ENCODE measurements at regions of chr6 and their contacts with region 1.

Region 1: DNA sequence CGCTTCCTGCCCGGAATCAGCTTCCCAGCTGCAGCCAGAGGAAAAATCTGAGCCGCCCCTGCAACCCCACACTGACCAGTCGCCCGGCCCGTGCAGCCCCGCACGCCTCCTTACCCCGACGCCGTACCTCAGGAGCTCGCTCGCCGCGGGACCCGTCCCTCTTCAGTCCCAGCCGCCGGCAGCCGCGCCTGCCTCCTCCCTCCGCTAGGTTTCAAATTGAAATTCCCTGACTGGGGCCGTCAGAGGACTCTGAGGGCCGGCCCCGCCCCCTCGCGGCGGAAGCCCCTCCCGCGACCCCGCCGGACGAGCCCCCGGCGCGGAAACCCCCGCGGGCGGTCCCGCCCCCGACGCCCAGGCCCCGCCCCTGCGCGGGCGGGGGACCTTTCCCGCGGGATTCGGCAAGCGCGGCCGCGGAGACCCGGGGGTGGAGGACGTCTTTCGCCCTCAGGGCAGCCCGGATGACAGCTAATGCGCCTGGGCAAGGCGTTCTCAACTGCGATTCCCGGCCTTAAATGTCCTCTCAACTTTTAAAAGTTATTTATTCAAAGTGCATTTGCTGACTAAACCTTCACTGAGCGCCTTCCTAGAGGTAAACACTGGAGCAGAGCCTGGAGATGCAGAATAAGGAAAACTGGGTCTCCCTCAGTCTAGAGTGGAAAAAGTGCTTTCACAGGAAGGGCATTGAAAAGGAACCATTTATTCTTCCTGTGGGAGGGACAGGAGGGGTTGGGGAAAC is at the start of gene EPB41L2:
- DNase-seq: peak; percentile 90 to 96 (median 93)
- H3K4me3 ChIP-seq: peak within 1 kb of the TSS; percentile 98
- H3K27ac ChIP-seq: peak within 1 kb of the TSS; percentile 65 to 81
- H3K4me1 ChIP-seq: peaks cover 3% of the 10 kb centered on the region
- H3K27me3 ChIP-seq: no peaks in the 10 kb centered on the region
- CTCF ChIP-seq: peak; percentile 29 to 51 (median 50)
- EP300 ChIP-seq: no peak
- POLR2A ChIP-seq: peak; percentile 84
- total RNA-seq, gene EPB41L2: 113 to 256 (median 204) TPM

Region 2: GRCh38 chr6:131015630-131016263 is 47.4 kb before region 1 on chr6:
- intact Hi-C with region 1: loop called in 1 of 4 experiments (anchors 5 kb)
- DNase-seq: peak in 2 of 5 donors; percentile 40 to 41
- H3K4me3 ChIP-seq: no peak overlapping the region
- H3K27ac ChIP-seq: peak overlapping the region in 1 of 2 donors; percentile 65
- H3K4me1 ChIP-seq: peaks cover 7% of the 10 kb centered on the region
- H3K27me3 ChIP-seq: no peaks in the 10 kb centered on the region
- CTCF ChIP-seq: no peak
- EP300 ChIP-seq: no peak
- POLR2A ChIP-seq: no peak

Region 3: GRCh38 chr6:131488780-131489179 is 425.6 kb after region 1 on chr6:
- intact Hi-C with region 1: no loop called
- DNase-seq: no peak
- H3K4me3 ChIP-seq: no peak overlapping the region
- H3K27ac ChIP-seq: no peak overlapping the region
- H3K4me1 ChIP-seq: no peaks in the 10 kb centered on the region
- H3K27me3 ChIP-seq: no peaks in the 10 kb centered on the region
- CTCF ChIP-seq: no peak
- EP300 ChIP-seq: no peak
- POLR2A ChIP-seq: no peak